ENCODE measurements at regions of chr5 and their contacts with region 1.

Region 1: DNA sequence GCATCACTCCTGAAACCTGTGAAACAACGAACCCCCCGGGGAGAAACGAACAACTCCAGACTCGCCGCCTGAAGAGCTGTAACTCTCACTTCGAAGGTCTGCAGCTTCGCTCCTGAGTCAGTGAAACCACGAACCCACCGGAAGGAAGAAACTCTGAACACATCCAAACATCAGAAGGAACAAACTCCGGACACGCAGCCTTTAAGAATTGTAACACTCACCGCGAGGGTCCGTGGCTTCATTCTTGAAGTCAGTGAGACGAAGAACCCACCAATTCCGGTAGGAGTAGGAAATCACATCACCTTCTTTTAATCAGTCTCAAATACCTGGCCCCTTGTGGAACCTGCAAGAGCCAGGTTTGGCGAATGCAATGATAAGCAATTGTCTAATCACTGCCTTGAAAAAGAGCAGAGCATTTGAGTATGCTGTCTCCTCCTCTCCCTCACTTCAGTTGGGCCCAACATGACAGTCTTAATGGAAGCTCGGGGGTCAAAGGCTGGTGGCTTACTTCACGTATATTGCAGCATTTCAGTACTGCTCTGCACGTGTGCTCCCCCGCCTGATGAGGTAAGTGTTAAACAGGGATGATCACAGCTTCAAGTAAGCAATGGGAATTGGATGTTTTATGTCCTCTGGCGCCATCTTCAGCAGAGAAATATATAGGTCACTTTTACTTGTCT is 473 bp downstream of the IRGM start:
- DNase-seq: peak; percentile 84
- H3K4me3 Mint-ChIP-seq: peak overlapping the region; percentile 66
- H3K27ac Mint-ChIP-seq: peak overlapping the region; percentile 89
- H3K4me1 Mint-ChIP-seq: peaks cover 22% of the 10 kb centered on the region
- H3K27me3 Mint-ChIP-seq: no peaks in the 10 kb centered on the region

Region 2: DNA sequence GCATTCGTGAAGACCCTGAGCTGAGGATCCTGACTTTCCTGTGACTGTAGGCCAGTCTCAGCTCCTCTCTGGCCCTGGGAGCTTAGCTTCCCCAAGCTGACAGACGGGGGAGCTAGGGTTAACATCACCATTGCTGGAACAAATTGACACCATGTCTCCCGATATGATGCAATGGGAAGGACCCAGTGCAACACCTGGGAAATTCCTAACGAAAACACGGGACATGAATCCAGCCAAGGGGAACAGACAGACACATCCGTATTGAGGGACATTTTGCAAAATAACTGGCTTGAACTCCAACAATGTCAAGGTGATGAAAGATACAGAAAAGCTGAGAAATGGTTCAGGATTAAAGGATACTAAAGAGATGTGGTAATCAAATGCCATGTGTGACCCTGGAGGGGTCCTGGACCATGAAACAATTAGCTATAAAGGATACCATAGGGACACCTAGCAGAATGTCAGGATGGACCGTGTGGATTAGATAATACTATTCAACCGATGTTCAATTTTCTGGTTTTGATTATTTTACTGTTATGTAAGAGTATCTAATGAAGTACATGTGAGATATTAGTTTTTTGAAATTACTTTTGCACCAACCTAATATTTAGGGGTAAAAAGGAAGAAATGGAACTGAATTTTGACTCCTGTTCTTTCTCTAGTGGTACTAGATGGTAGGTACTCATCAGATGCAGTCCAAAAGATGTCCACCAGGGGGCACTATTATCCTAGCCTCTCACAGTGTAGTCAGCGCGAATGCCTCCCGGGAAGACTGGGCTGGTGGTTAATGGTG is 286.2 kb before region 1 on chr5:
- CTCF ChIA-PET with region 1: interaction called, 49 read pairs
- POLR2A ChIA-PET with region 1: no interaction called
- DNase-seq: peak; percentile 91
- H3K4me3 Mint-ChIP-seq: no peak overlapping the region
- H3K27ac Mint-ChIP-seq: no peak overlapping the region
- H3K4me1 Mint-ChIP-seq: no peaks in the 10 kb centered on the region
- H3K27me3 Mint-ChIP-seq: no peaks in the 10 kb centered on the region

Region 3: GRCh38 chr5:150700594-150701293 is 146.1 kb before region 1 on chr5 and contains the start of gene RBM22:
- CTCF ChIA-PET with region 1: interaction called, 26 read pairs
- POLR2A ChIA-PET with region 1: interaction called, 10 read pairs
- DNase-seq: peak; percentile 94
- H3K4me3 Mint-ChIP-seq: no peak within 1 kb of the TSS
- H3K27ac Mint-ChIP-seq: no peak within 1 kb of the TSS
- H3K4me1 Mint-ChIP-seq: peaks cover 13% of the 10 kb centered on the region
- H3K27me3 Mint-ChIP-seq: no peaks in the 10 kb centered on the region
- total RNA-seq, gene RBM22: 61.9 to 65.6 TPM

Region 4: DNA sequence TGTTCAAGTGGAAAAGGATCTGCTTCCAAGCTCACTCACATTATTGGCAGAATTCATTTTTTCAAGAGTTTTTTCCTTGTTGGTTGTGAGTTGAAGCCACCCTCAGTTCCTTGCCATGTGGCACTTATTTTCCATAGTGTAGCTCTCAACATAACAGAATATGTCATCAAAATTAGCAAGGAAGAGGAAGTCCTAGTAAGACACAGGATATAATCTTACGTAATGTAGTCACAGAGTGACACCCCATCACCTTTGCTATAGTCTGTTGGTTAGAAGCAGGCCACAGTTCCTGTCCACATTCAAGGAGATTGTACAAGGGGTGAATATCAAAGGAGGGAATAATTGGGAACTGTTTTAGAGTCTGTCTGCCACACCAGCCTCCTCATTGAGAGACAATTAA is 15.3 kb after region 1 on chr5:
- CTCF ChIA-PET with region 1: no interaction called
- POLR2A ChIA-PET with region 1: no interaction called
- DNase-seq: no peak
- H3K4me3 Mint-ChIP-seq: no peak overlapping the region
- H3K27ac Mint-ChIP-seq: no peak overlapping the region
- H3K4me1 Mint-ChIP-seq: no peaks in the 10 kb centered on the region
- H3K27me3 Mint-ChIP-seq: no peaks in the 10 kb centered on the region

Measured in activated CD4-positive, alpha-beta T cell treated with anti-CD3 and anti-CD28 coated beads, Interleukin-2, amount 10 ng/mL, durations not matched to agents 7 days and 5 days (primary cell).